HEK293 (cell line): ENCODE measurements at regions of chr22 and their contacts with region 1.

Region 1: GRCh38 chr22:43346521-43346929 is 3.4 kb upstream of the SCUBE1 start:
- H3K4me3 ChIP-seq: no peak overlapping the region
- H3K27ac ChIP-seq: no peak overlapping the region
- H3K4me1 ChIP-seq: no peaks in the 10 kb centered on the region; the same call in 1 of the 2 replicates
- CTCF ChIP-seq: peak; percentile 84

Region 2: DNA sequence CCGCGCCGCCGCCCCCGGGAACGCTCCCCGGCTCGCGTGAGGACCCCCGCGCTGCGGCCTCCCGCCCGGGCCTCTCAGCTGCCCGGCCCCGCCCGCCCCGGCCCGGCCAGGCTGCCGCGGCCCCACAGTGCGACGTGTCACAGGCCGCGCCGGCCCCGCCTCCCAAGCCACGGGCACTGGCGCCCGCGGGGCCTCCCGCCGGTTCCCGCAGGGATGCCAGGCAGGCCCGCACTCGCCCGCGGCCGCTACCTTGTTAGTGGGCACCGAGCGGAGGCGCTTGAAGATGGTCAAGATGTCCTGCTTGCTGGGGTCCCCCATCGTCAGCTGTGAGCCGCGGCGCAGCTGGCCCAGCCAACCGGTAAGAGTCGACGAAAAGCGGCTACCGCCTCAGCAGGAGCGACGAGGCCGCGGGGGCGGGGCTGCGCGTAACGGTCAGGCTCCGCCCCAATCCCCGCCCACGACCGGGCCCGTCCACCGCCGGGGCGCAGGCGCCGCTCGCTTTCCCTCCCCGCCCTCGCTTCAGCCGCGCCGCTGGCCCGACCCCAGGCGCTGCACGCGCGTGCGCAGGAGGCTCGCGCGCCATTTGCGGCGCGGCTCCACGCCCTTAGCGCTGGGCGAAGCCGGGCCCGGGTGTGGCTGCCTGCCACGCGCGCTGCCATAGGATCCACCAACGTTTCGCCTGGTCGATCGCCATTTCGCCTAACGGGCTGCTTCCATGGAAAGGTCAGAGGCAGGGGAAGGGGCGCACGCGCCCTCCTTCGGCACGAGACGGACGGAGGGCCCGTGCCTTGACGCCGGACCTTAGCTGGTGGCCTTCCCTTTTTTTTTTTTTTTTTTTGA is 489.4 kb before region 1 on chr22 and contains the start of gene ARFGAP3:
- CTCF ChIA-PET with region 1: no interaction called
- POLR2A ChIA-PET with region 1: no interaction called
- H3K4me3 ChIP-seq: peak within 1 kb of the TSS; percentile 76
- H3K27ac ChIP-seq: peak within 1 kb of the TSS; percentile 81
- H3K4me1 ChIP-seq: peaks cover 14% of the 10 kb centered on the region
- CTCF ChIP-seq: no peak

Region 3: GRCh38 chr22:43263645-43264514 is 82.6 kb before region 1 on chr22:
- CTCF ChIA-PET with region 1: interaction called, 31 read pairs
- POLR2A ChIA-PET with region 1: no interaction called
- H3K4me3 ChIP-seq: peak overlapping the region; percentile 12
- H3K27ac ChIP-seq: no peak overlapping the region; the same call in 1 of the 2 replicates
- H3K4me1 ChIP-seq: peaks cover 9% of the 10 kb centered on the region
- CTCF ChIP-seq: no peak

Region 4: GRCh38 chr22:43313244-43313889 is 33.2 kb before region 1 on chr22:
- CTCF ChIA-PET with region 1: interaction called, 12 read pairs
- POLR2A ChIA-PET with region 1: no interaction called
- H3K4me3 ChIP-seq: no peak overlapping the region
- H3K27ac ChIP-seq: peak overlapping the region; percentile 85
- H3K4me1 ChIP-seq: peaks cover 23% of the 10 kb centered on the region
- CTCF ChIP-seq: no peak

Region 5: GRCh38 chr22:43356881-43357280 is 10.4 kb after region 1 on chr22:
- CTCF ChIA-PET with region 1: interaction called, 26 read pairs
- POLR2A ChIA-PET with region 1: interaction called, 3 read pairs
- H3K4me3 ChIP-seq: no peak overlapping the region
- H3K27ac ChIP-seq: no peak overlapping the region
- H3K4me1 ChIP-seq: no peaks in the 10 kb centered on the region
- CTCF ChIP-seq: no peak

Region 6: DNA sequence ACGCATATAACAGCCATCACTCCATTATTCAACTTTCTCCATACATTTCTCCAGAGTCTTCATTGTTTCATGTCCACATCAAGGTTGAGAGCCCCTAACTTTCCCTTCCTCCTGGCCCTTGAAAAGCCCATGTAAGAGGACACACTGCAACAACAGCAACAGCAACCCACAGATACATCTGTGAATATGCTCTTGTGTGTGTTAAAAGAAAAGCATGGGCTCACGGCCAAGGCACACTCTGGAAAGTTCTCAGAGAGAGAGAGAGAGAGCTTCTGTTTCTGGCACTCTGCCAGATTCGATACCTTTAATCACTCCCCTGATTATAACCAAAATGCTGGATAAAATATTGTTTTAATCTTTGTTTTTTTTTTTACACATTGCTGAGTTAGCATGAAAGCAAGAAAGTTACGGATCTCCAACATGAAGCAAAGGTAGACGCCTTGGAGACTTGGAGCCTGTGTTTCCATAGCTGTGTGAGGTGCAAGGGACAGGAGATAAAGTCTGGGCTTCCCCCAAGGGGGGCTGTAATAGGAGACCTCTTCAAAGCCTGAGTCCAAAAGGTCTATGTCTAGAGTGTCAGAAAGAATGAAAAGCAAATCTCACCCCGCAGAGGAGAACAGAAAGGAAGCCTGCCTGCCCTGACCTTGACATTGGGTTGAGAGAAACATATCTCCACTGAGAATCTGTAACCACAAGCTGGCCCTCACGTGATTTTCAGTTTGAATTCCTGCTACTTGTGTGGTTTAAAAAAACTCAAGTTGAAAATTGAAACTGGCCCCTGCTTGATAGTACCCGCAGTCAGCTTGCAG is 31.6 kb after region 1 on chr22:
- CTCF ChIA-PET with region 1: interaction called, 16 read pairs
- POLR2A ChIA-PET with region 1: no interaction called
- H3K4me3 ChIP-seq: no peak overlapping the region
- H3K27ac ChIP-seq: no peak overlapping the region
- H3K4me1 ChIP-seq: peaks cover 5% of the 10 kb centered on the region; the same call in 1 of the 2 replicates
- CTCF ChIP-seq: no peak

Region 7: GRCh38 chr22:43435851-43436811 is 89.6 kb after region 1 on chr22:
- CTCF ChIA-PET with region 1: no interaction called
- POLR2A ChIA-PET with region 1: no interaction called
- H3K4me3 ChIP-seq: no peak overlapping the region
- H3K27ac ChIP-seq: no peak overlapping the region
- H3K4me1 ChIP-seq: no peaks in the 10 kb centered on the region
- CTCF ChIP-seq: no peak